Dorsolateral prefrontal cortex (tissue), 120 donors: ENCODE measurements at regions of chr3 and their contacts with region 1.

Region 1: GRCh38 chr3:10224784-10225665 is 23.2 kb upstream of the TATDN2 start:
- DNase-seq: peak; percentile 57 to 82 (median 75)
- H3K4me3 ChIP-seq: peak overlapping the region in 1 of 59 donors; percentile 20
- H3K27ac ChIP-seq: peak overlapping the region in 49 of 59 donors; percentile 2 to 86 (median 62)
- H3K27me3 ChIP-seq: no peaks in the 10 kb centered on the region
- CTCF ChIP-seq: peak; percentile 69 to 97 (median 86)

Region 2: DNA sequence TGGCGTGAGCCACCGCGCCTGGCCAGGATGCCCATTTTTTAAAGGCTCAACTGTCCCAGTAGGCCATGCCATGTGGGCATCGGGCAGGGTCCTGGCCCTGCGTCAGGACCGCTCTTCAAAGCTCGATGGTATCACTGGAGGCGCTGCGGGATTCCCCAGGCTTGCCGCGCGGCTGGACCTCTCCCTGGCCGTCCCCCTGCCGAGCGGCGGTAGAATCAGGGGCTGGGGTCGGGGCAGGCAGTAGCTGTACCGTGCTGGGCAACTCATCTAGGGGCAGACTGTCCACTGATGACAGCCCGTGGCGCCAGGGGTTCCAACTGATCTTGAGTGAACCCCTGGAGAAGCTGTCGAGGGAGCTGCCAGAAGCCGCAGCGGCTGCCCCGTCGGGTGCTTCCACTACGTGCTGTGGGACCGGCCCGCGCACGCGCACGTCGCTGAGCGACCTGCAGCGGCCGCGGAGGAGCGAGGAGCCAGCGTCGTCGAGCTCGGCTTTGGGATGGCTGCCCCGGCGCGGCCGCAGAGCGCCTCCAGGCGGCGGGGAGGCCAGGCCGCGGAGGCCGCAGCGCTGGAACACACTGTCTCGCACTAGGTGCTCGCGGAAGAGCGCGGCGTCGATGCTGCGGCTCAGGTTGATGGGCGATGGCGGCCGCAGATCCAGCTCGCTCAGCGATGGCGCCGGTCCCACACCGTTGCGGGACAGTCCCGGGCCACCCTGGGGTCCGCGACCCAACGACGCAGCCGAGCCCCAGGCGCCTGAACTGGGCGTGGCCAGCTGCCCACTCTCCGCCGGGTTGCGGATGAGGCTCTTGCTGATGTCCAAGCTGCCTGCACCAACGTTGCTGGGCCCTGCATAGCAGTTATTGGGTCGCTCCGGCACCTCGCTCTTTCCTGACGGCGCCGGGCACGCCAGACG is 278.7 kb before region 1 on chr3:
- intact Hi-C with region 1: loop called in 1 of 2 experiments (anchors 10 kb)
- DNase-seq: peak; percentile 70 to 88 (median 76)
- H3K4me3 ChIP-seq: peak overlapping the region; percentile 42 to 81 (median 64)
- H3K27ac ChIP-seq: peak overlapping the region; percentile 46 to 95 (median 87)
- H3K27me3 ChIP-seq: no peaks in the 10 kb centered on the region
- CTCF ChIP-seq: peak; percentile 19 to 86 (median 74)

Region 3: GRCh38 chr3:10115326-10116137 is 109.5 kb before region 1 on chr3 and contains the start of gene BRK1:
- intact Hi-C with region 1: loop called in 1 of 2 experiments (anchors 5 kb)
- DNase-seq: peak; percentile 90 to 97 (median 96)
- H3K4me3 ChIP-seq: peak within 1 kb of the TSS; percentile 70 to 100 (median 95)
- H3K27ac ChIP-seq: peak within 1 kb of the TSS in 57 of 59 donors; percentile 29 to 97 (median 85)
- H3K27me3 ChIP-seq: no peaks in the 10 kb centered on the region
- CTCF ChIP-seq: peak in 42 of 56 donors; percentile 8 to 56 (median 30)
- total RNA-seq, gene BRK1: 62.8 to 136 (median 102) TPM

Region 4: DNA sequence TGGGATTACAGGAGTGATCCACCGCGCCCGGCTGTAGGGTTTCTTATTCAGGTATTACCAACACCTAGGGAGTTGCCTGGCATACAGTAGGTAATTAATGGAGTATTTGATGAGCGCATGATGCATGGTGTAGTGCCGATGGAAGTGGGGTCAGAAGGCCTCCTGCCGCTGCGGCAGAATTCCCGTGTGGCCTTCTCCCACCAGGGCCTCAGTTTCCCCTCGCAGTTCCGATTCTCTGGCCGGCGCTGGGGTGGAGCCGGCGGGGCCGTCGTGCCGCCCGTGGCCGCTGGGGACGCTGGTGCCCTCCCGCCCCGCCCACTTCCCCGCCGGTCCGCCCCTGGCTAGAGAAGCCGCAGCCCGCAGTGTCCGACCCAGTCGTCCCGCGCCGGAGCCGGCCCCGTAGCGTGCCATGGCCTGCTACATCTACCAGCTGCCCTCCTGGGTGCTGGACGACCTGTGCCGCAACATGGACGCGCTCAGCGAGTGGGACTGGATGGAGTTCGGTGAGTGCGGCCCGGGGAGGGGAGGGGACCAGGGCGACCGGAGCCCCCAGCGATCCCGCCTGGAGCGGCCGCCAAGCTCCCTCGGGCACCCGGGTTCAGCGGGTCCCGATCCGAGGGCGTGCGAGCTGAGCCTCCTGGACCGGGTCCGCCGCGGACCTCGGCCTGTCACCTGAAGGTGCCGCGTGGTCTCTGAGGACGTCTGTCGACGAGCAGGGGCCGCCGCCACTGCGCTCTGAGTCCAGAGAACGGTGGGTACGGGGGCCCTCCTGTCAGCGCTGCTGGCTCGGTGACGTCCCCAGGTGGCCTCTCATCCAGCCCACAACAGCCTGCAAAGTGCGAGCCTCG is 60.3 kb before region 1 on chr3 and contains the start of gene IRAK2:
- intact Hi-C with region 1: loop called (anchors 2 kb)
- DNase-seq: peak; percentile 56 to 79 (median 67)
- H3K4me3 ChIP-seq: peak within 1 kb of the TSS; percentile 58 to 98 (median 91)
- H3K27ac ChIP-seq: peak within 1 kb of the TSS in 58 of 59 donors; percentile 2 to 95 (median 85)
- H3K27me3 ChIP-seq: no peaks in the 10 kb centered on the region
- CTCF ChIP-seq: peak; percentile 45 to 96 (median 90)
- total RNA-seq, gene IRAK2: 3.6 to 16.8 (median 6.7) TPM

Region 5: DNA sequence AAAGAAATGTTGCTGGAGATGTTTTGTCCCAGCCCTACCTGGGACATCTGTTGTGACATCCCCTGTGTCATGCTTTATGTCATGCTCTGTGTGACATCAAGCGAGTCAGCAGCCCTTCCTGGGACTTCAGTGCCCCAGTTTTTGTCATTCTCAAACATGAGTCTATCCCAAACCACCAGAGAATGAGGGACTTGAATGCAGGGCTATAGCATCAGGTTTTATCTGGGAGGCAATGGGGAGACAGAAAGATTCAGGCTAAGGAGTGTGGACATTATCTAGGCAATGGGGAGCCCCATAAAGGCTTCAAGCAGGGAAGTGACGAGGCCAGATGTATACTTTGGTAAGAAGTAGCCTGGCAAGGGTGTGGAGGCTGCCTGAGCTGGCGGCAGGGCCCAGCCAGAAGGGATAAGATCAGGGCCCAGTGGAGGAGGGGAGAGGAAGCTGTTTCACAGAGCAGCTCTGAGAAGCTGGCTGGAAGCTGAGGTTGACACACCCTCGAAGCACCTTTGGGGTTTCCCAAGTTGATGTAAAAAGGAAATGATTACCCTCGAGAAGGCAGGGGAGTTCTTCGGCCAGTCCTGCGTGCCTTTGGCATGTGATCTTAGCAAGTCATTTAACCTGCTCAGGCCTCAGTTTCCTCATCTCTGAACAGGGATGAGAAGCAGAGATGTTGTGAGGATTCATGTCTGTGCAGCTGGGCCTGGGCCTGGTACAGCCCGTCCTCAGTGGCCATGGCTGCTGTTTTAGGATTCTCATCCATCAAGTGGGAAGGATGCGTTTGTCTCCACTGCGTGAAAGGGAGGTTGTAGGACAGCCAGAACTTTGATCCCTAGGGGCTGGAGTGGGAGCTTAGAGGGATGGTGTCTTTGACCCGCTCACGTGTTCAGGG is 26.0 kb before region 1 on chr3:
- intact Hi-C with region 1: loop called in 1 of 2 experiments (anchors 2 kb)
- DNase-seq: no peak
- H3K4me3 ChIP-seq: no peak overlapping the region
- H3K27ac ChIP-seq: peak overlapping the region in 56 of 59 donors; percentile 8 to 100 (median 74)
- H3K27me3 ChIP-seq: no peaks in the 10 kb centered on the region
- CTCF ChIP-seq: no peak

Region 6: DNA sequence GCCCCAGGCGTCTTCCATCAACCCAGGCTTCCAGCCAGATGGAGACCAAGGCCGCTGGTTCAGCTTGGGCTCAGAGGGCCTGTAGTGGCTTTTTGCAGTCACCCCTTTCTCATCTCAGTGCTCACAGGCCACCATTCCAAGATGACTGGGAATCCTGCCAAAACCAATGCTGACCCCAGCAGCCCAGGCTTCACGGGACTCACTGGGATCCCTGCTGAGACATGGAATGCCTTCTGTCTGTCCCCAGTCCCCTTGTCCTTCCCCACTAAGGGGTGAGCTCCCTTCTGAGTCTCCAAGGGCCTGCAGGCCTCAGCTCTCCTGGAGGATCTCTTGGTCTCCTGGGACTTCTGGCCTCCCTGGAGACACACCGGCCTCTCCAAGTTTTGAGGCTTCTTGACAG is 173.3 kb after region 1 on chr3:
- intact Hi-C with region 1: no loop called
- DNase-seq: no peak
- H3K4me3 ChIP-seq: no peak overlapping the region
- H3K27ac ChIP-seq: peak overlapping the region in 48 of 59 donors; percentile 12 to 83 (median 56)
- H3K27me3 ChIP-seq: no peaks in the 10 kb centered on the region
- CTCF ChIP-seq: no peak